ENCODE measurements at regions of chr19 and their contacts with region 1.

Region 1: GRCh38 chr19:2648528-2648937 is 54.0 kb downstream of the GNG7 start:
- DNase-seq: peak; percentile 79
- H3K4me3 Mint-ChIP-seq: no peak overlapping the region
- H3K27ac Mint-ChIP-seq: no peak overlapping the region
- H3K4me1 Mint-ChIP-seq: peaks cover under 1% of the 10 kb centered on the region
- H3K27me3 Mint-ChIP-seq: peaks cover 36% of the 10 kb centered on the region
- CTCF ChIP-seq: peak; percentile 84

Region 2: DNA sequence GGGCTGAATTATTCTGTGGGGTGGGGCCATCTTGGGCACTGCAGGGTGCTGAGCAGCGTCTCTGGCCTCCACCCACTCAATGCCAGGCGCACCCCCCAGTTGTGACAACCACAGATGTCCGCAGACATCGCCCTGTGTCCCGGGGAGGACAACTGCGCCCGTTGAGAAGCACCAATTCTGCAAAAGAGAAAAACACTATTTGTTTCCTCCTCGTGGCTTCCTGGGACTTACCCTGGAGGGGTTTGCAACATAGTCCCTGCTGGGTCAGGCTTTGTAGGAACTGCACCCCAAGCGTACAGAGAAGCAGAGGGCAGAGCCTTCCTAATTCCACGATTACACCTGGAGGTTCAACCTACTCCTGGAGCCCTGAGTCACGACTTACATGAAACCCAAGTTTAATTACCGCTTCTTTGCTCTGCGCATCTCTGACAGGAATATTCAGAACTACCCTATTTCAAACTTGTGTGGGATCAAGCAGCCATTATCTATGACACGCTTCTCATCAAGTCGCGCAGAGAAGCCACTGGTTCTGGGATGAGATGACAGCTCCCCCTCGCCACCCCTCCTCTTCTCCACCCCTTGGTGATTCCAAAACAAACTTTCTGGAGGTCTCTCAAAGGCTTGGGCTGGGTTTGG is 102.4 kb after region 1 on chr19:
- CTCF ChIA-PET with region 1: interaction called, 17 read pairs
- intact Hi-C with region 1: loop called (anchors 2 kb)
- DNase-seq: no peak
- H3K4me3 Mint-ChIP-seq: no peak overlapping the region
- H3K27ac Mint-ChIP-seq: no peak overlapping the region
- H3K4me1 Mint-ChIP-seq: no peaks in the 10 kb centered on the region
- H3K27me3 Mint-ChIP-seq: no peaks in the 10 kb centered on the region
- CTCF ChIP-seq: no peak